AG04450 (cell line): ENCODE measurements at regions of chr2 and their contacts with region 1.

Region 1: DNA sequence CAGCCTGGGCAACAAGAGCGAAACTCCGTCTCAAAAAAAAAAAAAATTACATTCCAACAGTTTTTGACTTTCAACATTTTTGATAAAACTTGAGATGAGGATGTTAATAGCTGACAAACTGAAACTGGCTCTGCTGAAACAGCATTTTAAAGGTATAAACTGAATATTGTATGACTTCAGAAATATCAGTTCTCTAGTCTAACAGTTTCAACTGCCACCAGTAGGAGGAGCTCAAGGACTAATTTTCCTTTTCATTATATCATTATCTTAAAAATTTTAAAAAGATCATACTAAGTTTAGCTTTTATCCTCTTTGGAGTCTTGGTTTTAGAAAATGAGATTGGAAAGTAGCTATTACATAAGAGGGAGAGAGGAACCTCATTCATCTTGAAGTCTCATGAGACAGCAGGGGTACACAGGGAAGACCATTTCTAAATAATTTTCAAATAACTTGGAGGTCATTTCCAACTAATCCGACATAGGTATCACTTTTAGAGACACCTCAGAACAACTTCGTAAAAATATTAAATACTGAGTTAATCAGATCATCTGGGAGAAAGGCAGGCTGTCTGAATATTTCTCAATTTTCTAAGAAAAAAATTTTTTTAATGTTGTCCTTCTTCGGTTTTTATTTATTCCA is 37.6 kb upstream of the MCM6 start:
- DNase-seq: no peak
- H3K4me3 ChIP-seq: no peak overlapping the region
- H3K27ac ChIP-seq: no peak overlapping the region
- H3K27me3 ChIP-seq: no peaks in the 10 kb centered on the region
- CTCF ChIP-seq: peak; percentile 76

Region 2: GRCh38 chr2:135650721-135651120 is 263.1 kb before region 1 on chr2:
- CTCF ChIA-PET with region 1: no interaction called
- POLR2A ChIA-PET with region 1: no interaction called
- DNase-seq: no peak
- H3K4me3 ChIP-seq: no peak overlapping the region
- H3K27ac ChIP-seq: no peak overlapping the region
- H3K27me3 ChIP-seq: no peaks in the 10 kb centered on the region
- CTCF ChIP-seq: no peak

Region 3: DNA sequence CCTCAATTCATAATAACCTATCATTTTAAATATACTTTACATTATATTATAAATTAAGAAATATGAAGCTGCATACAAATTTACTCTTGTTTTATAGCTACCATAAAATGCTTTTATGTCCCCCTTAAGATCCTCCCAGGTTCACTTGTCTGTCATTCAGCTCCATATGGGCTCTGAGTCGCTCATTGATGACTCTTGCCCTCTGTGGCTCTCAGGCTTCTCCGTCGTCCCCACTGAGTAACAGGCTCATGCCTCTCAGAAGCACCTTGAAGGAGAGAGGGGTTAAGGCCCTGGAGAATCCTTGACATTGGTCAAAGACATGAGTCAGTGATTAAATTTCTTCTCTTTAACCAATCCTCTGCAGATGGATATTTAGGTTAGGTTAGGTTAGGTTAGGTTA is 31.4 kb before region 1 on chr2:
- CTCF ChIA-PET with region 1: interaction called, 14 read pairs
- POLR2A ChIA-PET with region 1: no interaction called
- DNase-seq: no peak
- H3K4me3 ChIP-seq: no peak overlapping the region
- H3K27ac ChIP-seq: no peak overlapping the region
- H3K27me3 ChIP-seq: peaks cover 5% of the 10 kb centered on the region
- CTCF ChIP-seq: no peak

Region 4: GRCh38 chr2:135931776-135932443 is 18.1 kb after region 1 on chr2:
- CTCF ChIA-PET with region 1: interaction called, 16 read pairs
- POLR2A ChIA-PET with region 1: no interaction called
- DNase-seq: no peak
- H3K4me3 ChIP-seq: no peak overlapping the region
- H3K27ac ChIP-seq: no peak overlapping the region
- H3K27me3 ChIP-seq: no peaks in the 10 kb centered on the region
- CTCF ChIP-seq: no peak

Region 5: DNA sequence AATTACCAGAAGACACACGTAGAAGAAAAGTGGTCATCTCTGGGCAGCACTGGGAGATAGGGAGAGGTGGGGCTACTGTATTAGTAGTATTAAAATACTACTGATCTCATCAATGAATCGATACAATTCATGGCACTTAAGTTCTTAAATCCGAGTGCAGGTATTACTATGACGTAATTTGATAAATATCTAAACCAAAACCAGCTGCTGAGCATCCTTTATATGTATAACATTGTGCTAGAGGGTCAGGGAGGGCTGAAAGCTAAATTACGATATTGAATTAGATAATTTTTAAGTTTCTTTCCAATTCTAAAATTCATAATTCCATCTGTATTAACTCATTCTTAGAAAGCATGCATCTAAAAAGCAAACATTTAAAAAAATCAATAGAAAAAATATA is 46.3 kb after region 1 on chr2:
- CTCF ChIA-PET with region 1: interaction called, 14 read pairs
- POLR2A ChIA-PET with region 1: no interaction called
- DNase-seq: no peak
- H3K4me3 ChIP-seq: no peak overlapping the region
- H3K27ac ChIP-seq: no peak overlapping the region
- H3K27me3 ChIP-seq: no peaks in the 10 kb centered on the region
- CTCF ChIP-seq: no peak

Region 6: GRCh38 chr2:136378712-136379595 is 465.1 kb after region 1 on chr2:
- CTCF ChIA-PET with region 1: interaction called, 31 read pairs
- POLR2A ChIA-PET with region 1: no interaction called
- DNase-seq: no peak
- H3K4me3 ChIP-seq: no peak overlapping the region
- H3K27ac ChIP-seq: no peak overlapping the region
- H3K27me3 ChIP-seq: no peaks in the 10 kb centered on the region
- CTCF ChIP-seq: peak; percentile 56

Region 7: DNA sequence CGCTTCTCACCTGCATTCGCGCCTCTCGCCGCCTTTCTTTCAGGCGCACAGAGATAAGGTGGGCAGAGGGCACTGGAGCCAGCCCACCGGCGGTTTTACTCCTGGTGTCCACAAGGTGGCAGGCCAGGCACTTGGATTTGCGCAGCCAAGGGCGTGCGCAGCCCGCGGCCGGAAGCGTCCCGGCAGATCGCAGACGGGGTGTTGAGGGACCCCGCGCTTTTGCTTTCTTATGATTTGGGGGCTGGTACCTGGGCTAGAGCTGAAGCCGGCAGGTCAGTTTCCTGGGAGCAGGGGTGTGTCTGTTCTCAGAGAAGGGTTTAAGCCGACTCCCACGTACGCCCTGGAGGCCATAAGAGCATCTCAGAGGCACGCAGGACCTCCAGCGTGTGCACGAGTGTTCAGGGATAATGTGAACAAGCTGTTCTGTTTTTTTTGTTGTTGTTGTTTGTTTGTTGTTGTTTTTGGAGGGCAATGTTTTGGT is 509.7 kb after region 1 on chr2:
- CTCF ChIA-PET with region 1: interaction called, 21 read pairs
- POLR2A ChIA-PET with region 1: no interaction called
- DNase-seq: peak; percentile 10
- H3K4me3 ChIP-seq: peak overlapping the region; percentile 62
- H3K27ac ChIP-seq: no peak overlapping the region
- H3K27me3 ChIP-seq: no peaks in the 10 kb centered on the region
- CTCF ChIP-seq: peak; percentile 85